ENCODE measurements at regions of chr12 and their contacts with region 1.

Region 1: GRCh38 chr12:15532364-15532977 is 210.2 kb downstream of the PTPRO start:
- DNase-seq: no peak
- ATAC-seq: peak; percentile 59

Region 2: GRCh38 chr12:15446807-15447206 is 85.7 kb before region 1 on chr12:
- intact Hi-C with region 1: no loop called
- DNase-seq: no peak
- ATAC-seq: no peak

Region 3: DNA sequence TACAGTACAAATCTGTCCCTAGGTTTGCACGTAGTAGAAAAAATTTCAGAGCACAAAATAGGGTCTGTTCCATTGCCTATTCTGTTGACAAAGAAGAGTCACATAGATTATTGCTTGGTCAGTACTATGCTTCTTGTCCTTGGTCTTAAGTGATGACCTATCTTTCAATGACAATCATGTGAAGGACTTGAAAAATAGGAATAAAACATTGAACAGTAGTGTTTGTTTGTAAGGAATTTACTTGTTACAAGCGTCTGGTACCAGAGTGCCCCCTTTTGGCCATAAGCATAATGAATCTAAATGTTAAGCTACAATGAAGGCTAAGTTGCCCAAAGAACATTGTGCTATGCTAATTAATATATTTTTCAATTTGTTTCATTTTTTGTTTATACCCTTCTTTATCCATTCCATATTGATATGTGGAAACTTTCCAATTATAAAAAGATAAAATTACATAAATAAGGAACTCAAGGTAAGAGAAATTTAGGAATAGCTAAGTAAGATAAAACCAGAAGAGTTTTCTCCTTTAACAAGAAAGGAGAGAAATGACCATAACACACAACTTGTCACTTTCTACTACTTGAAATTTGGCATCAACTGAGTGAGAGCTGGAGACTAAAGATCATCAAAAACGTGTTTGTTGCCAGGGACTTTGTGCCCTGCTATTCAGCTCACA is 52.0 kb after region 1 on chr12:
- intact Hi-C with region 1: loop called (anchors 5 kb)
- DNase-seq: no peak
- ATAC-seq: no peak

Region 4: GRCh38 chr12:15856097-15856982 is 323.9 kb after region 1 on chr12:
- intact Hi-C with region 1: loop called (anchors 5 kb)
- DNase-seq: no peak
- ATAC-seq: no peak

Measured in Right ventricle myocardium inferior (tissue), 1 donor.